ENCODE measurements at regions of chr11 and their contacts with region 1.

Region 1: GRCh38 chr11:75663808-75664207 is 5.0 kb downstream of the MAP6 start:
- DNase-seq: no peak
- H3K4me3 ChIP-seq: no peak overlapping the region
- H3K27ac ChIP-seq: no peak overlapping the region
- H3K4me1 ChIP-seq: 0 out of 2 replicates have a peak, but pooled peaks cover 5% of the 10 kb centered on the region
- H3K27me3 ChIP-seq: no peaks in the 10 kb centered on the region
- CTCF ChIP-seq: no peak

Region 2: GRCh38 chr11:75615706-75616105 is 48.1 kb before region 1 on chr11:
- CTCF ChIA-PET with region 1: no interaction called
- POLR2A ChIA-PET with region 1: no interaction called
- intact Hi-C with region 1: loop called (anchors 5 kb)
- DNase-seq: no peak
- H3K4me3 ChIP-seq: no peak overlapping the region
- H3K27ac ChIP-seq: no peak overlapping the region
- H3K4me1 ChIP-seq: no peaks in the 10 kb centered on the region
- H3K27me3 ChIP-seq: no peaks in the 10 kb centered on the region
- CTCF ChIP-seq: no peak